HAP-1 (cell line): ENCODE measurements at regions of chr1 and their contacts with region 1.

Region 1: GRCh38 chr1:23403735-23404486 is 20.6 kb downstream of the TCEA3 start:
- DNase-seq: peak; percentile 91 to 96
- H3K4me3 ChIP-seq: 0 out of 2 replicates have a peak overlapping the region, but pooled peaks have one; percentile 4
- H3K4me1 ChIP-seq: peaks cover 7% of the 10 kb centered on the region
- H3K27me3 ChIP-seq: no peaks in the 10 kb centered on the region

Region 2: DNA sequence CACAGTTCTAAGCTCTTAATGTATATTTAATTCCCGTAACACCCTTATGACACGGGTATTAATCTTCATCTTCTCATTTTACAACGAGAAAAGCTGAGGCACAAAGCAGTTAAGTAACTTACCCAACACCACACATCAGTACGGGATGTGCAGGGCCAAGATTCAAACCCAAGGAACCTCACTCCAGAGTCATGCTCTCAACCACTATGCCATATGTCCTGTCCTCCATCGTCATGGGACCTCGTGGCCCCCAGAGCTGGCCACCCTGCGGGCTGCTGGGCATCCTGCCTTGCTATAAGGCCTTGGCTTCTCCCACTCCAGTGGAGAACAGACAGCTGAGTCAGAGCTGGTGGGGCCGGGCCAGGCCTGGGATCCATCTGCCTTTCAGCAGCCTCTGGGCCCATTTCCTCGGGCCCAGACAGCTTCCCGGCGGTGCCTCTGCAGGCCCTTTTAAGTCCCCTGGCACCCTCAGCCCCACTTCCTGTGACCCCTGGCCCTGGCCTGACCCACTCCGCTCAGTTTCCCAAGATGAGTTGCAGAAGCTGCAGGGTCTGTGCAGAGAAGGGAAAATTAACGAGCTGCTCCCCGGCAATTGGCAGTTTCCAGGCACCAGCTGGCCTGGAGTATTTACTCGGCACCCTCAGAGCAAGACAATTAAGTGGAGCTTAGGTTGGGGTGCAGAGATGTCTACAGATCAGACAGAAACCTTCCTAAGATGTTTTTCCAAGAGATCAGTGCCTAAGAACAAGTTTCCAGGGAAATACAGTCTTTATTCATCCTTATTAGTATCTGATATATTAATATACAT is 595.0 kb before region 1 on chr1:
- in situ Hi-C with region 1: no loop called
- DNase-seq: no peak
- H3K4me3 ChIP-seq: no peak overlapping the region
- H3K4me1 ChIP-seq: no peaks in the 10 kb centered on the region
- H3K27me3 ChIP-seq: no peaks in the 10 kb centered on the region

Region 3: DNA sequence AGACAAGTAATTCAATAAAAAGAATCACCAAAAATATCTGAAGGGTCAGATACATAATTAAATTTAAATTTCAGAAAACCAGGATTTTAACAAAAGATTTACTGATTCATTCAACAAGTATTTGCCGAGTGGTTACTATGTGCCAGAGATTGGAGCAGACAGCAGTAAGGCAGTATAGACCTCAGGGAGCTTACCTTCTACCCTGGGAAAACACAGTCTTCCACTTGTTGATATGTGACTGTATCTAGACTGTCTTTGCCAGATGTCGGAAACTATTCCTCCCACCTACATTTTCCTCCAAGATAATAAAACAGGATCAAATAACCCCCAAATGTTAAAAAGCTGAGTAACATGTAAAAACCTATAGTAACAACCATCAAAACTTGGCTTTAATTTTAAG is 66.0 kb before region 1 on chr1:
- in situ Hi-C with region 1: loop called (anchors 10 kb)
- DNase-seq: no peak
- H3K4me3 ChIP-seq: no peak overlapping the region
- H3K4me1 ChIP-seq: peaks cover 25% of the 10 kb centered on the region
- H3K27me3 ChIP-seq: no peaks in the 10 kb centered on the region

Region 4: DNA sequence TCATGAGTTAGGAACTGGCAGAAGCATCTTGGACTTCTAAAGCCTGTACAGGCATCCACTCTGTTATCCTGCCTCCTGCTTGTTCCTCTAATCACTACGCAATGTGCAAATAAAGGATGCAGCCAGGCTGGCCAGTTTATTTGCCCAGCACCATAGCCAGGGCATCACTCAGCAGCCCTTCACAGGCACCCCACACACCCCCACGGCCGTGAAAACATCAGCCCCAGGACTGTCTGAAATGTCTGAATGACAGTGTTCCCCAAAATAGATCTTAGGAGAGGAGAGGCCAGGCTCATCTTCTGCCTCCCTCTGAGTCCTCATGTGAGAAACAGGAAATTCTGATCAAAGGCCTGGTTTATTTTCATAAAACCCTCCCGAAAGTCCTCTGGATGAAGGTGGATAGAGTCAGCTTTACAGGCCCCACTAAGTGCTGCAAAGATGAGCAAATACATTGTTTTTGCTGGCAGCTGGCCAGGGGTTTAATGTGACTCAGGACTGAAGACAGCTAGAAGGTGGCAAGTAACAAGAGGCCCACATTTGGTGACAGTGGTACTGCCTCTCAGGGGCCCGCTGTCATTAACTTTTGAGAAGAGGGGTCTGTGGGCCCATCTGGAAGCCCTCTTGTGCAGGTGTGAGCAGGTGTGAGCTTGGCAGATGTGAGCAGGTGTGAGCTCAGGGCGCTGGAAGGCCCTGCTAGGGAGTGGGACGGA is 948.2 kb after region 1 on chr1:
- in situ Hi-C with region 1: no loop called
- DNase-seq: no peak
- H3K4me3 ChIP-seq: no peak overlapping the region
- H3K4me1 ChIP-seq: no peaks in the 10 kb centered on the region
- H3K27me3 ChIP-seq: no peaks in the 10 kb centered on the region